ENCODE measurements at regions of chr1 and their contacts with region 1.

Region 1: DNA sequence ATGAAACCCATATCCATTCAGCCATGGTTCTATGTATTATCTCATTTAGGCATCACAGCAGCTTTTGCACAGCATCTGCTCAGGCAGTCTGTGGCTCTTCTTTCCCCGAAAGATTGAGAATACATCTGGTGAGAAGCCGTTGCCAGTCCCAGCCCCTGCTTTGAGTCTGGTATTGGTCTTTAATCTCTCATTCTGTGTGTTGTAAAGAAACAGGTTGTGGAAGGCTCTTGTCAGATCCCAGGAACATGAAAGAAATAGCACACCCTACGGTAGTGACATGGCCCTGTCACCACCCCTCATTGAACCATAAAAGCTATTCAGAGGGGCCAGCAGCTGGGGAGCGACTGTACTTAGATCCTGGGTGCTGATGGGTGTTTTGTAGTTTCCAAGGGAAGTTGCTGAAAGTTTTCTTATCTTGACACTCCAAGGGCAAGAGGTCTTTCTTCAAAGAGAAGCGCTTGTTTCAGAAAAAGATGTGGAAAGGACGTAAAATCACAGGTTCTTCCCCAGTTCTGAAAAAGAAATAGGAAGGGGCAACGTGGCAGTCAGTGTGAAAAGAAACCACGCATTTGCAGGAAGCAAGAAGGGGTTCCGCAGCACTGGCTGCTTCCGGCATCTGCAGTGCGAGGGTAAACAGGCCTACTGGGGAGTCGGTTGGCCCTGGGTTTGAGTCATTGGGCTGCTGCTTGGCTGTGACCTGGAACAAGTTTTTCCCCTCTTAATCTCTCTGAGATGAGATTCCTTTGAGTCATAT is 145.0 kb downstream of the DHRS3 start:
- DNase-seq: peak; percentile 92
- ATAC-seq: peak; percentile 87
- H3K4me3 Mint-ChIP-seq: peak overlapping the region; percentile 67
- H3K27ac Mint-ChIP-seq: peak overlapping the region; percentile 95
- H3K4me1 Mint-ChIP-seq: peaks cover 90% of the 10 kb centered on the region
- H3K27me3 Mint-ChIP-seq: no peaks in the 10 kb centered on the region
- CTCF ChIP-seq: no peak

Region 2: GRCh38 chr1:12448746-12449177 is 24.2 kb before region 1 on chr1:
- CTCF ChIA-PET with region 1: interaction called, 4 read pairs
- POLR2A ChIA-PET with region 1: interaction called, 13 read pairs
- intact Hi-C with region 1: loop called (anchors 1 kb)
- DNase-seq: no peak
- ATAC-seq: no peak
- H3K4me3 Mint-ChIP-seq: peak overlapping the region; percentile 57
- H3K27ac Mint-ChIP-seq: peak overlapping the region; percentile 95
- H3K4me1 Mint-ChIP-seq: peaks cover 93% of the 10 kb centered on the region
- H3K27me3 Mint-ChIP-seq: no peaks in the 10 kb centered on the region
- CTCF ChIP-seq: no peak

Region 3: DNA sequence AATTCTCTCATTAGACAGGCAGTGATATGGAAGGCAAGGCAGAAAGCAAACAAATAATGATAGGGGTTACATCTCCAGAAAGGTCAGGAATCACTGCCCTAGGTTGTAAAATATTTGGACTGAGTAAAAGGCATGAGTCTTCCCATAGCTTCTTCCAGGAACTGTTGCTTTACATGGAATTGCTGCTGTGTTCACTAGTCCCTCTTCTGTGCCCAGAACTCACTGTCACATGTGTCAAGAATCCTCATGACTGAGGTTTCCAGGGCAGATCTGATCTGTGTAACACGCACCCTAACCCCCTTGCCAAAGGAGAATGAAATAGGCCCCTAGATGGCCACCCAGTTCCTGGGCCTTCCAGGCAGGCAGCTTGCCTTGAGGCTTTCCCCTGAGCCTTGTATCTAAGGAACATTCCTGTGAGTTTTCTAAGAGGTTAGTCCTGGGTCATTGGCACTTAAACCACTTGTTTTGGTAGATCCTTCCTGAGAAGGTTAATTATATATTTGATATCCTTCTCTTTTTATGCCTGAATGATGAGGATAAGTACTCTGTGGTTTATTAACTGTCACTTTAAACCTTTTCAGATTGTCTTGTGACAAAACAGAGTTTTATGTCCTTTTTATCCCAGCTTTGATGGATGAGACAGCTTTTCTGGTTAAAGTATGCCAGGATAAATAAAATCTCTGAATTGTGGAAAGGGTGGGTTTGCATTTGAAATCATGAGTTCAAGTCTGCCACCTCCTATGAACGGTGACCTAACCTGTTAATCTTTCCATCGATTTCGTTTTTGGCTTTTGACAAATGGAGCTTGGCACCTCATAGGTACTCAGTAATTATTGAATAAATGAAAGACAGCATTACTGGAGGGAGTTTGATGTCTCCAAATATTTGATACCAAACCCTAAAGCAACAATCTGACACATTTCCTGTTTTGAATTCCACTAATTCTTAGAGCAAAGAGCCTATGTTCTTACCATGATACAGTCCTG is 18.3 kb before region 1 on chr1:
- CTCF ChIA-PET with region 1: interaction called, 4 read pairs
- POLR2A ChIA-PET with region 1: interaction called, 13 read pairs
- intact Hi-C with region 1: loop called (anchors 1 kb)
- DNase-seq: no peak
- ATAC-seq: no peak
- H3K4me3 Mint-ChIP-seq: peak overlapping the region; percentile 10
- H3K27ac Mint-ChIP-seq: peak overlapping the region; percentile 94
- H3K4me1 Mint-ChIP-seq: peaks cover 87% of the 10 kb centered on the region
- H3K27me3 Mint-ChIP-seq: no peaks in the 10 kb centered on the region
- CTCF ChIP-seq: no peak

Region 4: GRCh38 chr1:12511516-12512468 is 38.8 kb after region 1 on chr1:
- CTCF ChIA-PET with region 1: interaction called, 18 read pairs
- POLR2A ChIA-PET with region 1: interaction called, 28 read pairs
- intact Hi-C with region 1: loop called (anchors 5 kb)
- DNase-seq: no peak
- ATAC-seq: no peak
- H3K4me3 Mint-ChIP-seq: peak overlapping the region; percentile 75
- H3K27ac Mint-ChIP-seq: peak overlapping the region; percentile 100
- H3K4me1 Mint-ChIP-seq: peaks cover 60% of the 10 kb centered on the region
- H3K27me3 Mint-ChIP-seq: no peaks in the 10 kb centered on the region
- CTCF ChIP-seq: no peak